ENCODE measurements at regions of chr7 and their contacts with region 1.

Region 1: DNA sequence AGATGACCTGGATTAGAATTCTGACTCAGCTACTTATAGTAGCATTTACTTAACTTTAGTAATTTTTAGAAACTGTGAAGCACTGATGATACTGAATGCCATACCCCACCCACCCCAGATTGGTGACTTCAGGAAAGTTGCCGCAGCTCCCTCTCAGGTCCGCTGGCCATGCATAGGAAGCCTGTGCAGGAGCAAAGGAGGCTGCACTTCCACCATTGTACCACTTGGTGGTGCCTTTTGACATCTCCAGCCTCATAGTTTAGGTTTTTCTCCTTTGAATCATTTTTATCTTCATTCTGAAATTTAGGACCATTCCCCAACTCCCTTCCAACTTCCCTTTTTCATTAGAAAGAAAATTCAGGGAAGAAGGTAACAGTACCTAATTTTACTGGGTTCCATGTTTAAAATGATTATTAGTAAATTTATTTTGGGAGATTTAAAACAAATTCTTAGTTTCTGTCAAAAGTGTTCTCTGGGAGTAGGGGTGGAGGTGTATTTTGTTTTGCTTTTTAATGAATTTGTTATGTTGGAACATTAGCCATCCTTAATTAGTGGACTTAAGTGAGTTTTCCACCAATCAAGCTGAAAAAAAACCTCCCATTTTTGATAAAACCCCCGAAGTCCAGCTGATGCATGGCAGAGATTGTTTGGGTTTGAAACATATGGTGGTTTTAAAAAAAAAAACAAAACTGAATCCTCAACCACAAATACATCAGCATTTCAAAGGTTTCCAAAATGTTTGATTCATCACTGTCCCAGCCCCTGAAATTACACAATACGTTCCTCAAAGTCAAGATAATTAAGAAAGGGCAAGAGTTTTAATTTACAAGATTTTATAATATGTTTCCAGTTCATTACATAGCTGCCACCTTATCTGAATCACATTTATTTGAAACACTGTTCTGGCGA is 109.6 kb downstream of the WNT2 start:
- H3K4me3 ChIP-seq: no peak overlapping the region
- H3K27ac ChIP-seq: no peak overlapping the region
- H3K4me1 ChIP-seq: no peaks in the 10 kb centered on the region
- CTCF ChIP-seq: peak; percentile 70

Region 2: DNA sequence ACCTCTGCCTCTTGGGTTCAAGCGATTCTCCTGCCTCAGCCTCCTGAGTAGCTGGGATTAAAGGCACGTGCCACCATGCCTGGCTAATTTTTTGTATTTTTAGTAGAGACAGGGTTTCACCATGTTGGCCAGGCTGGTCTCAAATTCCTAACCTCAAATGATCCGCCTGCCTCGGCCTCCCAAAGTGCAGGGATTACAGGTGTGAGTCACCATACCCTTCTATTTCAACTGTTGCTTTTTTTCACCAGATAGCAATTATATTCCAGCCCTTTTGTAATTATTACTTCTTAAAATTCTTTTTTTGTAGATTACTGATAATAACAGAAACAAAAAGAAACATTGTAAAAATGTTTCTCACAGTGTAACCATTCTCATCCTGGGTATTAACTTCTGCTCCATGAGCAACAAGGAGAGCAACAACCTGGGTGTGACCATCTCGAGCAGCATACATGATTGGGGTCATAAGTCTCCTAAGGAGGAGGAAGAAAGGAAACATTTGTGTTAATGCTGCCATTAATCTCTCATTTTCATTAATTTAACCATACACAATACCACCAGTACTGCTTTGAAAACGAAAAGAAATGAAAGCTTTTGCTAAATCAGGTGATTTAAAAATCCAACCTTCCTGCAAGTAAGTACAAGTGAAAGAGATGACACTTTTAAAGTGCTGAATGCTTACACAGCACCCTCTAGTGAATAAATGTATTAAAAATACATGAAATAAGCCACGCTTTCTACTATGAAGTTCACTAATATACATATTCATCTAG is 172.3 kb after region 1 on chr7:
- CTCF ChIA-PET with region 1: interaction called, 19 read pairs
- POLR2A ChIA-PET with region 1: no interaction called
- H3K4me3 ChIP-seq: no peak overlapping the region
- H3K27ac ChIP-seq: no peak overlapping the region
- H3K4me1 ChIP-seq: peaks cover 7% of the 10 kb centered on the region; the same call in 1 of the 2 replicates
- CTCF ChIP-seq: no peak

Measured in HEK293 (cell line).